ENCODE measurements at regions of chr6 and their contacts with region 1.

Region 1: GRCh38 chr6:36302227-36302976 is 32.5 kb downstream of the PNPLA1 start:
- DNase-seq: peak; percentile 94 to 96
- H3K4me3 ChIP-seq: no peak overlapping the region
- H3K27ac ChIP-seq: peak overlapping the region in 1 of 5 donors; percentile 22
- H3K4me1 ChIP-seq: peaks cover 0 to 20% (median 12%) of the 10 kb centered on the region in 4 donors
- H3K27me3 ChIP-seq: peaks cover 0 to 9% (median 0%) of the 10 kb centered on the region in 3 donors
- CTCF ChIP-seq: peak in 5 of 7 experiments; percentile 75 to 95 (median 89)
- EP300 ChIP-seq: no peak
- POLR2A ChIP-seq: no peak

Region 2: DNA sequence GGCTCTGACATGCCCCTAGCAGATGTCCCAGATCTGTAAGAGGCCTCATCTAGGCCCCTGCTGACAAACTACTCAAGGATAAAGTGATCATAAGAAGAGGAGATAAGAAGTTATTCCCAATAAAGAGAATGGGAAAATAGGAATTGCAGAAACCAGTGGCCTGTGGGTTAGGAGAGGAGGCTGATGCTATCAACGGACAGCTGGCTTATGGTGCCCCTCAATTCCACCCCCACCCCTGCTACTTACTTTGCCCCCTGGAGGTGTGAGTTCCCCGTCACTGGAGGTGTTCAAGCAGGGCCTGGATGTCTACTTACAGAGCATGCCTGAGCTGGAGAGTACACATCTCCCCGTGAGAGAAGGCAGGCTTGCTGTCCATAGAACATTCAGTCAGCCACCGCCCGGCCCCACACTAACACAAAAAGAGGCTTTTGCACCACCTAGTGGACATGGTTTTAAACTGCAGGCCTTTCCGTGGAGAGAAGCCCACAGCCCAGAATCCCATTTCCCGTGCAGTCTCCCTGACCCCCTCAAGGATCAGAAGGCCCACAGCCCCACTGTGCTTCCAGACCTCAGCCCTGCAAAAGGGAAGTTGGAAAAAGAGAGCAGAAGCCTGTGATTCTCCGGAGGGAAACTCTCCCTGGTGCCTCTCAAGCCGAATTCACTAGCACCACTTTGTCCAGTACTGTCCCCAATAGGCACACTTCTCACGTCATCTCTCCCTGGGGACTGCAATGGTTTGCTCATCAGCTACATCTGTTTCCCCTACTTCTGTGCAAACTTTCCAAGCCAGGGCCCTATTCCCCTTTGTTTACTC is 58.0 kb after region 1 on chr6:
- intact Hi-C with region 1: loop called (anchors 5 kb)
- DNase-seq: peak; percentile 83 to 93
- H3K4me3 ChIP-seq: no peak overlapping the region
- H3K27ac ChIP-seq: no peak overlapping the region
- H3K4me1 ChIP-seq: peaks cover 8 to 42% (median 18%) of the 10 kb centered on the region in 4 donors
- H3K27me3 ChIP-seq: no peaks in the 10 kb centered on the region
- CTCF ChIP-seq: peak in 5 of 7 experiments; percentile 76 to 85 (median 82)
- EP300 ChIP-seq: no peak
- POLR2A ChIP-seq: no peak